Dorsolateral prefrontal cortex (tissue), 120 donors: ENCODE measurements at regions of chr14 and their contacts with region 1.

Region 1: GRCh38 chr14:94129111-94129757 is at the start of gene IFI27L2:
- DNase-seq: peak; percentile 41 to 80 (median 74)
- H3K4me3 ChIP-seq: peak within 1 kb of the TSS; percentile 39 to 82 (median 66)
- H3K27ac ChIP-seq: peak within 1 kb of the TSS; percentile 50 to 94 (median 88)
- H3K27me3 ChIP-seq: no peaks in the 10 kb centered on the region
- CTCF ChIP-seq: peak in 49 of 56 donors; percentile 21 to 65 (median 44)
- total RNA-seq, gene IFI27L2: 39.5 to 131 (median 61.8) TPM

Region 2: DNA sequence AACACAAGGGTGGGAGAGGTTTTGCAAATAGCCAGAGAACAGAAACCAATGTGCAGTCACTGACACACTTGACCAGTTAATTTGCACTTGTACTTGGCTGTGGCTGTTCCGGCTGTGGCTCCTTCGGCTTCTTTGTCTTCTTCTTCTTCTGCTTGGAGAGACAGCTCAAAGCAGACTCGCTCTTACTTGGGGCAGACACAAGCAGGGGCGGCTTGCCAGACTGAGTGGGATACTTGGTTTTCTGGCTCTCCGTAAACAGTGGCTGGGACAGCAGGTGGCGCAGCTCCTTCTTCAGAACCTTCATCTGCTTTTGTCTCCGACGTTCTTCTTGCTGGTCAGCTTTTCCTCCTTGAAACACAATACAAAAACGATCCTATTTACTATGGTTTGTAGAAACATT is 78.1 kb before region 1 on chr14:
- intact Hi-C with region 1: loop called in 1 of 2 experiments (anchors 5 kb)
- DNase-seq: peak; percentile 54 to 89 (median 80)
- H3K4me3 ChIP-seq: peak overlapping the region in 1 of 59 donors; percentile 17
- H3K27ac ChIP-seq: peak overlapping the region in 46 of 59 donors; percentile 1 to 75 (median 44)
- H3K27me3 ChIP-seq: no peaks in the 10 kb centered on the region
- CTCF ChIP-seq: peak; percentile 27 to 79 (median 64)

Region 3: DNA sequence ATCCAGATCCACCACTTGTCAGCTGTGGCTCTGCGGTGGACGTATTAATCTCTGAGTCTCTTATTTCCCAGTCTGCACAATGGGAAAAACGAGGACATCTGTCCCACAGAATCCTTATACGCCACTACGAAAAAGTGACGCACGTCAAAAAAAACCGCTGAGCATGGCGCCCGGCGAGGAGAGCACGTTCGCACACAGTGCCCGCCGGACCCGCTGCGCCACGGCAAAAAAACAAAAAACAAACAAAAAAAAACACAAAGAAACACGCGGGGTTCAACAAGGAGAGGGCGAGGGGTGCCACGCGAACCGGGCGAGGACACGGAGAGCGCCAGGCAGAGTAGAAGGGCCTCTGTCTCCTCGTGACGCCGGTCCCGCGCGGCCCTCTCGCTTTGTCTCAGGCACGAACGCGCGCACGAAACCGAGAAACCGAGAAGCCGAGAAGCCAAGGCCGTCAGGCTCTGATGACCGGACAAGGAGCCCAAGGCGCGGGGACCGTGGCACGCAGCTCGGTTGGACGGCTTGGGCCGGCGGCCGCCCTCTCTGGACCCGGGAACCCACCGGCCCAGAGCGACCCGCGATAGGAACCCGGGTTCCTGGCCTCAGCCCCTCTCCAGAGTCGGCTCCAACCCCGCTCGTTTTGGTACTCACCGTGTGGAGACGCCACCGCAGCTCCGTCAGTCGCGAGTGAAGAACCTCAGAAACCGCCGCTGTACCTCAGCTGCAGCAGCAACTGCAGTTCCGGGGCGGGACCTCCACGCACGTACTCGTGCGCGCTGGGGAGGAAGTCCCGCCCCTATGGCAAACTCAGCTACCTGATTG is 48.6 kb before region 1 on chr14 and contains the start of gene DDX24:
- intact Hi-C with region 1: loop called (anchors 2 kb)
- DNase-seq: peak; percentile 92 to 98 (median 96)
- H3K4me3 ChIP-seq: peak within 1 kb of the TSS; percentile 74 to 99 (median 95)
- H3K27ac ChIP-seq: peak within 1 kb of the TSS in 57 of 59 donors; percentile 41 to 97 (median 89)
- H3K27me3 ChIP-seq: no peaks in the 10 kb centered on the region
- CTCF ChIP-seq: peak in 20 of 56 donors; percentile 9 to 48 (median 28)
- total RNA-seq, gene DDX24: 170 to 541 (median 413) TPM

Region 4: DNA sequence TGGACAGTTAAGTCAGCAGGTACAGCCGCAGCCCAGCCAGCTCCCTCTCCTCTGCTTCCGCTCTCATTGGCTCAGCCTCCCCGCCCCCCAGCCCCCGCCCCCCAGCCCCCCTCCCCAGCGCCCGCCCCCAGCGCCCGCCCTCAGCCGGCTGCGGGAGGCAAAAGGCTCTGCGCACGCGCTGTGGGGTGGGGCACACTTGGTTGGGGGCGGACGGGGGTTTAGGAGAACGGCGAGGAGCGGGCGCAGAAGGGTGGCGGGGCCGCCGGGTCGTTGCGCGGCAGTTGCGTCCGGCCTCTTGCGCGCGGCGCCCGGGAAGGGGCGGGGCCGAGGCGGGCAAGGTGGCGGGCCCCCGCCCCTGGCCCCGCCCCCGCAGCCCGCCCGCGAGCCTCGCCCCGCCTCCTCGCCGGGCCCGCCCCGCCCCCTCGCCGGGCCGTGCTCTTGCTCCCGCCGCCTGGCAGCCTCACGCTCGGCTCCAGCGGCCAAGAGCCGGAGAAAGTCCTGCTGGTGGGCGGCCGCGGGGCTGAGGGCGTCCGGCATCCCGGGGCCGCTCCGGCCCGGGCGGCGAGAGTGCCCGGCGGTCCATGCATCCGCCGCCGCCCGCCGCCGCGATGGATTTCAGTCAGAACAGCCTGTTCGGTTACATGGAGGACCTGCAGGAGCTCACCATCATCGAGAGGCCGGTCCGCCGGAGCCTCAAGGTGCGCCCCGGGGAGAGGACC is 44.8 kb after region 1 on chr14 and contains the start of gene PPP4R4:
- intact Hi-C with region 1: loop called in 1 of 2 experiments (anchors 5 kb)
- DNase-seq: peak; percentile 56 to 87 (median 74)
- H3K4me3 ChIP-seq: peak within 1 kb of the TSS; percentile 62 to 93 (median 80)
- H3K27ac ChIP-seq: peak within 1 kb of the TSS in 51 of 59 donors; percentile 3 to 84 (median 66)
- H3K27me3 ChIP-seq: peaks cover 0 to 7% (median 0%) of the 10 kb centered on the region in 45 donors
- CTCF ChIP-seq: peak in 4 of 56 donors; percentile 2 to 19 (median 16)
- total RNA-seq, gene PPP4R4: 9.9 to 65.6 (median 28.7) TPM

Region 5: DNA sequence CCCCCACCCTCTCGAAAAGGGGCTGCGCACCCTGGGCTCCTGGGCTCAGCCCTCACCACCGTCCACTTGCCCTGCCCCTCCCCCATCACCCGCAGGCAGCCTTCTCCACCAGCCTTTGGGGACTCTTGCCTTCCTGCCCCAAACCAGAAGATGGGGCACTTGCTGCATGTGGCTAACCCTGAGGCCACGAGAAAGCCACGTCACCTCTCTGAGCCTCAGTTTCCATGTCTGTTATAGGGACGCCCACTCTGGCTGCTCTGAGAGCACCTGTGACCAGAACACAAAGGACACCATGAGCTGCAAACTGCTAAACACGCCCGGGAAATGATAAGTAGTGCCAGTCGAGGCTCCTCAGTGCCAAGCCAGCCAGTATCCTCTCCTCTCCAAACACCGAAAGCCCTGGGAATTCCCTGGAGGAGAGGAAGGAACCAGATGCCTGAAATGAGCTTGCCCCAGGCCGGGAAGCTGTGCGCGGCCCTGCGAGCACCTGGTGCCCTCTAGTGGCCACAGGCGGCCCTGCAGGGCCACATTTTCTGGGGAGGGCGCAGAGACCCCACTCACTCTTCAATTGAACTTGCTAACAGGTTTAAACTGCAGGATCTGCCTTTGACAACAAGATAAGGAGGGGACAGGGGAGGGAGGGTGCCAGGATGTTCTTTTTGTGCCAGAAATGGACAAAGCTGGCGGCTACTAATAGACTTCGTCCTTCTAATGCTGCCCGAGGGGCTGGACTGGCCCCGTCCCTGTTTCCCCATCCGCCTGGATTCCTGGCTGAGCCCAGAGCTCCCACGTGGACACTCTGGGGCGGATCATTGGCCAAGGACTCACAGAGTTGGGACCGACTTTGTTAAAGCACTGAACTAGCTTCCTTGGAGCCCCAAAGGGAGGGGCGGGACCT is 357.0 kb after region 1 on chr14:
- intact Hi-C with region 1: loop called in 1 of 2 experiments (anchors 5 kb)
- DNase-seq: peak in 7 of 10 donors; percentile 18 to 72 (median 37)
- H3K4me3 ChIP-seq: peak overlapping the region in 25 of 59 donors; percentile 0 to 55 (median 21)
- H3K27ac ChIP-seq: no peak overlapping the region
- H3K27me3 ChIP-seq: peaks cover 0 to 18% (median 0%) of the 10 kb centered on the region in 45 donors
- CTCF ChIP-seq: peak; percentile 79 to 99 (median 93)